ENCODE measurements at regions of chr1 and their contacts with region 1.

Region 1: DNA sequence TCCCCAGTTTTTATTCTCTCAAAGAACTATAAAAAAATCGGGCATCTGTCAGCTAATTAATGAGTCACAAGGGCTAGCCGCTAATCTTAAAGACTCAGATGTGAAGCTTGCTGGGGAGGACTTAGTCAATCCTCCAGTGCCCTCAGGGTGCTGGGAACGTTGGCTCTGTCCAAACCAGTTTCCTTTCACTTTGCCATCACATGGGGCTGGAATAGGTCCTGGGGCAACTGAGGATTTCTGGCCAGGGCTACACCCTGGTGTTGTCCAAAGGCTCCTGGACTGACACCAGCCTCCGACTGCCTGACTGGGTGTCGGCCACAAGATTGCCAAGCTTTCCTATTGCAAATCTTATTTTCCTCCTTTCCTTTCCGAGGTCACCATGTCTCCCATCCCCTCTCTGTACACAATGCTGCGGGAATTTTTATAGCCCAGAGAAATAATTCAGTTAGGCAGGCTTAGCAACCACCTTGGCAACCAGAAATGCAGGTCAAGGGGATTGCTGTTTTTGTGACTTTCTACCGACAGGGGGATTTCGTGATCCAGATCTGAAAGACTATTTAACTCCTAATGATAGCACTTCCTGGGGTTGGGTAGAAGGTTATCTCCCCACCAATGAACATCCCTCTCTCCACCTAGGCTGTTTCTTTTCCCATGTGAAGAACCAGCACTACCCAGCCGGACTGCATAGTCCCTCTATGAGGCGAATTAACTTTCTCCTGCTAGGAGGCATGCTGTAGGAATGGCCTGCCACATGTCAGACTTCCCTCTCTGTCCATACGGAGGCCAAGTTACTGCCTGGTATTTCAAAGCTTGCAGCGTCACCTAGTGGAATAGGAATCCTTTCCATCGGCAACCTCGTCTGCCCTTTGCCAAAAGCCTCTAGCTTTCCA is 29.9 kb upstream of the CTBS start:
- DNase-seq: peak; percentile 62 to 87
- H3K4me3 ChIP-seq: no peak overlapping the region
- CTCF ChIP-seq: no peak
- POLR2A ChIP-seq: no peak

Region 2: GRCh38 chr1:84133479-84133878 is 470.7 kb before region 1 on chr1:
- intact Hi-C with region 1: loop called (anchors 10 kb)
- DNase-seq: no peak
- H3K4me3 ChIP-seq: no peak overlapping the region
- CTCF ChIP-seq: no peak
- POLR2A ChIP-seq: no peak

Region 3: GRCh38 chr1:84442256-84442655 is 161.9 kb before region 1 on chr1:
- intact Hi-C with region 1: loop called (anchors 5 kb)
- DNase-seq: no peak
- H3K4me3 ChIP-seq: no peak overlapping the region
- CTCF ChIP-seq: no peak
- POLR2A ChIP-seq: no peak

Measured in lower leg skin (tissue), 4 donors.